ENCODE measurements at regions of chr18 and their contacts with region 1.

Region 1: DNA sequence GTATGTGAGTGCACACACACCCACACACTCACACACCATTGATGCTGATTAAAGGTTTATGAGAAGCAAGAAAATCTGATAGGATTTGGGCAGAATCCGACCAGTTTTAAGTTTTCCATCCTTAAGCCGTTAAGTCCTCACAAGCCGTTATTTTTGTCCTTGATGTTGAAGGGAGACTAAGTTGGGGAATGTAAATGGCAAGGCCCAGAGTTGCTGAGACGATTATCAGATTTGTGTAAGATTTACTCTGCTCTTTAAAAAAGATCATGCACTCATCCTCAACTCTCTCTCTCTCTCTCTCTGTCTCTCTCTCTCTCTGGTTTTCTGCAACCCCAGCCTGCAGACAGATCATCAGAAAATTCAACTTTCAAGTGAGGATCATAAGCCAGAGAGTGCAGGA is 238.8 kb downstream of the SMAD2 start:
- DNase-seq: no peak
- H3K4me3 Mint-ChIP-seq: no peak overlapping the region
- H3K27ac Mint-ChIP-seq: no peak overlapping the region
- H3K4me1 Mint-ChIP-seq: no peaks in the 10 kb centered on the region
- H3K27me3 Mint-ChIP-seq: peaks cover 8% of the 10 kb centered on the region

Region 2: DNA sequence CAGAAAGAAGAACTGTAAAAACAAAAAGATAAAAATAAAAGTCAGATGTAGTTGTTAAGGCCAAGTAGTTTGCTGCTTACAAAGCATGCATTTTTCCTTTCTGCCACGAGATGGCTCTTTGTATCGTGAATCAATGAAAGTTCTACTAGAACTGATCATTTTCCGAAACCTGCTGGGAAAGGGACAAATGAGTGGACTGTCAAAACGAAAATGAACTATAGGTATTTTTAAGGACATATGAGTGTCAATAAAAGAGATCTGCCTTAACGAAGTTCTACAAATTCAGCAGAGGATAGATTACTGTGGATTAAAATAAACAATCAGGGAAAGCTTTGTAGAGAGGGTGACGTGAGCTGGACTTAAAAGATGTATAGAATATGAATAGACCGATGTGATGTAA is 641.1 kb before region 1 on chr18:
- intact Hi-C with region 1: loop called (anchors 5 kb)
- DNase-seq: no peak
- H3K4me3 Mint-ChIP-seq: no peak overlapping the region
- H3K27ac Mint-ChIP-seq: no peak overlapping the region
- H3K4me1 Mint-ChIP-seq: no peaks in the 10 kb centered on the region
- H3K27me3 Mint-ChIP-seq: peaks cover 6% of the 10 kb centered on the region

Measured in activated T-helper 2 cell treated with anti-CD3 and anti-CD28 coated beads, Interferon-gamma antibody, Interleukin-2, Interleukin-4, amounts not matched to agents 10 μg/mL and 5 μg/mL and 100 μg/mL, durations not matched to agents 14 hours and 24 hours and 36 hours (primary cell).